ENCODE measurements at regions of chr18 and their contacts with region 1.

Region 1: DNA sequence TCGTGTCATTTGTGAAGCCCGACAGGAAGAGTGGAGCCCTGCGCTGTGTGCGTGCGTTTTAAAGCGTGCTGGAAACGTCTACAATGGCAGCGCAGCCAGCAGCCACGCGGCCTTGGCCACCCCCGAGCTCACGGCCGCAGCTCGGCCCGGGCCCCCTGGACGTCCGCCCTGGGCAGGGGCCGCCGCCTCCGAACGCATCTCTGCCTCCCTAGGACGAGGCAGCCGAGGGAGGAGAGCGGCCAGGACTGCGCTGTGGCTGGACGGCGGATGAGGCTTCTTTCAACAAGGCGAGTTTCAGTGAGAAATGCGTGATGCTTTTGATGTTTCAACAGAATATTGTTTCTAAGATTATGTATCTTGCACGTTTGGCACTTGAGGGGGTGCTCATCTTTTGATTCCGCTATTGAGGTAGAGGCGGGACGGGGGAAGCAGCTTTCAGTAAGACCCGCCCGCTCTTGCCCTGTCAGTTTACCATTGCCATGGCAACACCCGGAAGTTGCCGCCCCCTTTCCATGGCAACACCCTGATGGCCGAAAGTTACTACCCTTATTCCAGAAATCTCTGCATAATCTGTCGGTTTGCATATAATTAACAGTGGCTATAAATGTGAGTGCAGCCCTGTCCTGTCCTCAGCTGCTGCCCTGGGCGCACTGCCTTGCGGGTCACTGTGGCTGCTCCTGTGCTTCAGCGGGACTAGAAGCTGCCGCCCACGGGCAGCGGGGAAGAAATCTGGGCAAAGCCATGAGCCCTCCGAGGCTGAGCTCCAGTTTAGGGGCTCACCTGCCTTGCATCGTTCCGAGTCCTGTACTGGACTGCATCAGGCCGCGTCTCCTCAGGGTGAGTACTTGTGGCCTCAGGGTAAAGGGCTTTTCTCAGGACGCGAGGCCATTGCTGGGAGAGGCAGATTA is 38.6 kb downstream of the ADNP2 start:
- DNase-seq: peak; percentile 90
- H3K4me3 Mint-ChIP-seq: peak overlapping the region; percentile 82
- H3K27ac Mint-ChIP-seq: no peak overlapping the region
- H3K4me1 Mint-ChIP-seq: peaks cover 10% of the 10 kb centered on the region
- H3K27me3 Mint-ChIP-seq: peaks cover 24% of the 10 kb centered on the region

Region 2: DNA sequence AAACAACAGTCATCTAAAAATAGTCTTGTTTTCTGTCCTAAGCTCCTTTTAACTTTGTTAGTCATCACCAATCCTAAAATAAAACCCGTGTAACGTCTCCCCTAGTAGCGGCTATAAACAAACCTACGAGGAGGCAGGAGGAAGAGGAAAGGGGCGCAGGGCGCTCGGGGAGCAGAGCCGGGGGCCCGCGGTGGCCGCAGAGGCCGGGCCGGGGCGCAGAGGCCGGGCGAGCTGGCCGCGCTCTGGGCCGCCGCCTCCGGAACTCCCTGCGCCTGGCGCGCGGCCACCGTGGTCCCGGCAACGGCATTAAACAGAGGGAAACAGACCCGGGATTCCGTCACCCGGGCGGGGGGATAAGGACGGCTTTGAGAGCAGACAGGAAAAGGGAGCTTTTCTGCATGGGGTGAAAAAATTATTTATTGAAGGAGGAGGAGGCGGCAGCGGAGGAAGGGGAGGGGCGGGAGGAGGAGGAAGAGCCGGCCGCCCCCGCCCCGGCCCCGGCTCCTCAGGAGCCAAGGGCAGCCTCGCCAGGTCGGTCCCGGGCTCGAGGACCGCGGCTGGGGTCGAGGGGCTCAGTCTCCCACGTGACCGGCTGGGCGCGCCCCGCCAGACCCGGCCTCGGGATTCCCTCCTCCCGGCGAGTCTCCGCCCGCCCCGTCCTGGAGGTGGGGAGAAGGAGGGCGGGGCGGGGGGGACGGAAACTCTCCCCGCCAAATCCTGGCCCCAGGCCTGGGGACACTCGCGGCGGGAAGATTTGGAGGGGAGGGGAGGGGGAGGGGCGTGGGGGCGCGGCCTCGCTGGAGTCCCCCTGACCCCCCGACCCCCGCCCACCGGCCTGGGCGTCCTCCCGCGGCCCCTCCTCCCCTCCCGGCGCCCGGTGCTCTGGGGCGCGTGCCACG is 753.8 kb before region 1 on chr18:
- CTCF ChIA-PET with region 1: no interaction called
- intact Hi-C with region 1: loop called (anchors 10 kb)
- DNase-seq: peak; percentile 73
- H3K4me3 Mint-ChIP-seq: peak overlapping the region; percentile 74
- H3K27ac Mint-ChIP-seq: peak overlapping the region; percentile 71
- H3K4me1 Mint-ChIP-seq: peaks cover 34% of the 10 kb centered on the region
- H3K27me3 Mint-ChIP-seq: peaks cover 5% of the 10 kb centered on the region

Region 3: DNA sequence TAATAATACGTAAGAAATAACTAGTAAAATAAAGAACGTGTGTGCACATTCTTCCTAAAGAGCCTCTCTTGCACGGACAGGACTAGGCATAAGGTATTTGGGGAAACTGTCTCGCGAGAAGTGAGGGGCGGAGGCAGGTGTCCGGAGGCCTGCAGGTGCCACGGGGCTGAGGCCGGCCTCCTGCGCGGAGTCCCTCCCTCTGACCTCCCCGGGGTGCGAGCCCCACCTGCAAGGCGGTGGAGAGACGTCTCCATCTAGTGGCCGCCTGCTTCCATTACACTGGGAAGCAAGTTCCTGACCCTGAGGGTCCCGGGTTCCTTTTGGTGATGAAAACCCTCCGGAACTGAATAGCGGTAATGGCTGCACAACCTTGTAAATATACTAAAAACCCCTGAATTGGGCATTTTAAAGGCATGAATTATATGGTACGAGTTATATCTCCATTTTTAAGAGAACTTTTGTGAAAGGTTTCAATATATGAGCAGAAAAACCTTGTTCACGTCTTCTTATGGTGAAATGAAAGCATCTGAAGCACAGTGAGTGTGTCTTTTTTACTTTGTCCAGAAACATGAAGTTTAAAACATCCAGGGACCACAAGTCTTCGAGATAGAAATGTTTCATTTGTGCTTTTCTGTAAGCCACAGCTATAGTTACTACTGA is 503.5 kb before region 1 on chr18:
- CTCF ChIA-PET with region 1: no interaction called
- intact Hi-C with region 1: no loop called
- DNase-seq: peak; percentile 78
- H3K4me3 Mint-ChIP-seq: no peak overlapping the region
- H3K27ac Mint-ChIP-seq: no peak overlapping the region
- H3K4me1 Mint-ChIP-seq: peaks cover 4% of the 10 kb centered on the region
- H3K27me3 Mint-ChIP-seq: peaks cover 9% of the 10 kb centered on the region

Region 4: GRCh38 chr18:80034068-80034851 is 113.4 kb before region 1 on chr18 and contains the start of gene RBFA:
- CTCF ChIA-PET with region 1: no interaction called
- intact Hi-C with region 1: loop called (anchors 1 kb)
- DNase-seq: peak; percentile 100
- H3K4me3 Mint-ChIP-seq: peak within 1 kb of the TSS; percentile 82
- H3K27ac Mint-ChIP-seq: peak within 1 kb of the TSS; percentile 73
- H3K4me1 Mint-ChIP-seq: peaks cover 26% of the 10 kb centered on the region
- H3K27me3 Mint-ChIP-seq: no peaks in the 10 kb centered on the region
- total RNA-seq, gene RBFA: 35.7 to 36.0 TPM

Region 5: GRCh38 chr18:80086281-80086680 is 61.4 kb before region 1 on chr18:
- CTCF ChIA-PET with region 1: no interaction called
- intact Hi-C with region 1: no loop called
- DNase-seq: no peak
- H3K4me3 Mint-ChIP-seq: no peak overlapping the region
- H3K27ac Mint-ChIP-seq: no peak overlapping the region
- H3K4me1 Mint-ChIP-seq: no peaks in the 10 kb centered on the region
- H3K27me3 Mint-ChIP-seq: peaks cover 16% of the 10 kb centered on the region

Region 6: DNA sequence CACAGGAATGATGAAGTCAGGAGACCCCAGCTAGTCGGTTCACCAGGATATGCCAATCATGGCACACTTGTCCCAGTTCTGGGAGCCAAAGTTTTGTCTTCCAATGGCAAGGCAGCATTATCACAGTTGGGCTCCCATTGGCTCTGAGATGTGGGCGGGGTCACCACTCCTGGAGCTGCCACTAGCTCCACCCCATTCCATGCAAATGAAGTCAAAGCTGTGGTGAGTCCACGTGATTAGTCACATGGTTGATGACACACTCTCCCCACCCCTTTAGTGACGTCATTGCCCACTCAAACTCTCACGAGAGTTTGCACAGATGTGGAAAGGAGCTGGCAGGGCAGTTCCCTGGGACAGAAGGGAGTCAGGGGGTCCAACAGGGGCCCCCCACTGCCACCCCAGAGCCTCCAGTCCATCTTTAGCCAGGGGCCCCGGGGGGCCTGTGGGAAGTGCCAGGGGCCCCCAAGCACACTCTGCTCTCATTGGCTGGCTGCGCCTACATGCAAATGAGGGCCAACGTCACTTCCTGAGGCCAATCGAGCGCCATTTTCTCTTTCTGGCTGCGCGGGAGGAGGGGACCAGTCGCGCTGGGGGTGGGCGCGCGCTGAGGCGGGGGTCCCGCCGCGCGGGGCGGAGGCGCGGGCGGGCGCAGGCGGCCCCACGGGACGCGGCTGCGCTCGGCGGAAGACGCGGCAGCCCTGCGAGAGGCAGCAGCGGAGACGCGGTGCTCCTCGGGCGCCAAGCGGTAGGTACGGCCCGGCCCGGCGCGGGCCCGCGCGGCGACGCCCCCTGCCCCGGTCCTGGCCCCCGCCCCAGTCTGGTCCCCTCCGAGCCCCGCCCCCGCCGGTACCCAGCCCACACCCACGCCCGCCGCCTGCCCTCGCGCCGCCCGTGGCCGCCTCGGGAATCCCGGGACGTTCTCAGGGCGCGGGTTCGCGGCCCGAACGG is 38.7 kb before region 1 on chr18 and contains the start of gene ADNP2:
- CTCF ChIA-PET with region 1: no interaction called
- intact Hi-C with region 1: loop called (anchors 2 kb)
- DNase-seq: peak; percentile 92
- H3K4me3 Mint-ChIP-seq: peak within 1 kb of the TSS; percentile 79
- H3K27ac Mint-ChIP-seq: peak within 1 kb of the TSS; percentile 80
- H3K4me1 Mint-ChIP-seq: peaks cover 32% of the 10 kb centered on the region
- H3K27me3 Mint-ChIP-seq: no peaks in the 10 kb centered on the region
- total RNA-seq, gene ADNP2: 16.8 to 18.0 TPM